ENCODE measurements at regions of chr11 and their contacts with region 1.

Region 1: GRCh38 chr11:32052218-32052617 is 38.7 kb upstream of the RCN1 start:
- DNase-seq: peak in 9 of 10 donors; percentile 20 to 76 (median 52)
- H3K4me3 ChIP-seq: no peak overlapping the region
- H3K27ac ChIP-seq: no peak overlapping the region
- H3K27me3 ChIP-seq: peaks cover 0 to 17% (median 0%) of the 10 kb centered on the region in 45 donors
- CTCF ChIP-seq: peak; percentile 79 to 97 (median 86)

Region 2: DNA sequence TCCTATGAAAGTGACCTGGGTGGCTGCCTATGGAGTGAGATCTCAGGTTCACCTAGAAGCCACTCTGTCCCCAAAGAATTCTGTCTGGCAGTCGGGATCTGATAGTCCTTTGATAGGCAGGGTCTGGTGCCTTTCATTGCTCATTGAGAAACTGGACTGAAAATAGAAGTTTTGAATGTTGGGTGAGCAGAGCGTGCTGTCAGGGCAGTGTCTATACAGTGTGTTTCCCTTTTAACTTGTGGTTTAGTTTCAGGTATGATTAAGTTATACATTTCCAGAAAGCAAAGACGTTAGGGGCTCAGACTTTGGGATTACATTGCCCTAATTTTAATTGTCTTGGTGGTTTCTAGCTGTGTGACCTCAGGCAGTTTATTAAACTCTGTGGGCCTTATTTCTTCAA is 129.8 kb before region 1 on chr11:
- intact Hi-C with region 1: no loop called
- DNase-seq: no peak
- H3K4me3 ChIP-seq: no peak overlapping the region
- H3K27ac ChIP-seq: no peak overlapping the region
- H3K27me3 ChIP-seq: peaks cover 0 to 5% (median 0%) of the 10 kb centered on the region in 45 donors
- CTCF ChIP-seq: no peak

Region 3: DNA sequence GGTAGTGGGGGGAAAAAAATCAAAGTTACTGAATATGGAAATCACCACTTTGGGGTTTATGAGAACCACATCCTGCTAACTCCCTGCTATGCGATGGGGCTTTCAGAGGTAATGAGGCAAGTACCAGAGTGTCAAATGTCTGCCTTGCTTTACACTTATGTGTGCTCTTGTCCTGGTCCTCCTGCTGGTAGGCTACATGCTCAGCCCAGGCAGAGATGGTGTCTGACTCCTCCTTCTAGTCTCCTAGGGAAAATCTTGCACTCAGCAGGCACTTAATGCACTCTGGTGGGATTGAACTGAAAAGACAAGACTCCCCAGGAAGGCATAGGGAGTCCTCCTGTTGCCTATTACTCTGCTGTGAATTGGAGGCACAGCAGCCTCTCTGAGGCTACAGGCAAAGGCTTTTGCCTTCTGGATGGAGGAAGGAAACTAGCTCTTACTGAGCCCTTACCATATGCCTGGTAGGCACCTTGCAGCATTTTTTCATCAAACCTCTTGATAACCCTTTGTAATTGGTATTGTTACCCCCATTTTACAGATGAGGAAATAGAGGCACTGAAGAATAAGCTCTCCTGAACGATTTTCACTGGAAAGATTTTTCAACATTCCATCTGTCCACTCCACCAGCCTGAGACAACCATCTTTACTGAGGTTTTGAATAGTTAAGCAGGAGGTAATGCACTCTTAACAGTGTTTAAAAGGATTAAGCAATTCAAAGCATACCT is 109.0 kb before region 1 on chr11:
- intact Hi-C with region 1: no loop called
- DNase-seq: no peak
- H3K4me3 ChIP-seq: no peak overlapping the region
- H3K27ac ChIP-seq: no peak overlapping the region
- H3K27me3 ChIP-seq: peaks cover 0 to 22% (median 0%) of the 10 kb centered on the region in 45 donors
- CTCF ChIP-seq: no peak

Region 4: DNA sequence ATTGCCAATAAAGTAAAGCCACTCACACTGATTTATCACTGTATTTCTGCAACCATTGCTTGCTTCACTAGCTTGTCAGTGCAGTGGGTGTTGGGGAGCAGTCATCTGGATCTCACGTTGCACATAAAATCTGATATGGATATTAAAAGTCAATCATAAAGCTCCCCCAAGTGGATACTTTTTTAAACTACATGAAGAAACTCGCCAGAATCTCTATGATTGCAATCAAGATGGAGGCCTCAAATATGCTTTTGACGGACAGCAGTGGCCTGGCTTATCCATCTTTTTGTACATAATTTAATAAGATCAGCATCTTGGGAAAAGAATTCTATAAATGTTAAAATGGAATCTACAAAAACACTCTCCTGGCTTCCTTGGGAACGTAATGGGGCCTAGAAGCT is 245.4 kb after region 1 on chr11:
- intact Hi-C with region 1: loop called (anchors 2 to 5 kb)
- DNase-seq: peak in 4 of 10 donors; percentile 7 to 49 (median 38)
- H3K4me3 ChIP-seq: no peak overlapping the region
- H3K27ac ChIP-seq: peak overlapping the region in 2 of 59 donors; percentile 1 to 47
- H3K27me3 ChIP-seq: no peaks in the 10 kb centered on the region
- CTCF ChIP-seq: peak; percentile 41 to 83 (median 62)

Region 5: GRCh38 chr11:32366666-32367065 is 314.4 kb after region 1 on chr11:
- intact Hi-C with region 1: no loop called
- DNase-seq: no peak
- H3K4me3 ChIP-seq: no peak overlapping the region
- H3K27ac ChIP-seq: no peak overlapping the region
- H3K27me3 ChIP-seq: peaks cover 0 to 6% (median 0%) of the 10 kb centered on the region in 45 donors
- CTCF ChIP-seq: no peak

Region 6: DNA sequence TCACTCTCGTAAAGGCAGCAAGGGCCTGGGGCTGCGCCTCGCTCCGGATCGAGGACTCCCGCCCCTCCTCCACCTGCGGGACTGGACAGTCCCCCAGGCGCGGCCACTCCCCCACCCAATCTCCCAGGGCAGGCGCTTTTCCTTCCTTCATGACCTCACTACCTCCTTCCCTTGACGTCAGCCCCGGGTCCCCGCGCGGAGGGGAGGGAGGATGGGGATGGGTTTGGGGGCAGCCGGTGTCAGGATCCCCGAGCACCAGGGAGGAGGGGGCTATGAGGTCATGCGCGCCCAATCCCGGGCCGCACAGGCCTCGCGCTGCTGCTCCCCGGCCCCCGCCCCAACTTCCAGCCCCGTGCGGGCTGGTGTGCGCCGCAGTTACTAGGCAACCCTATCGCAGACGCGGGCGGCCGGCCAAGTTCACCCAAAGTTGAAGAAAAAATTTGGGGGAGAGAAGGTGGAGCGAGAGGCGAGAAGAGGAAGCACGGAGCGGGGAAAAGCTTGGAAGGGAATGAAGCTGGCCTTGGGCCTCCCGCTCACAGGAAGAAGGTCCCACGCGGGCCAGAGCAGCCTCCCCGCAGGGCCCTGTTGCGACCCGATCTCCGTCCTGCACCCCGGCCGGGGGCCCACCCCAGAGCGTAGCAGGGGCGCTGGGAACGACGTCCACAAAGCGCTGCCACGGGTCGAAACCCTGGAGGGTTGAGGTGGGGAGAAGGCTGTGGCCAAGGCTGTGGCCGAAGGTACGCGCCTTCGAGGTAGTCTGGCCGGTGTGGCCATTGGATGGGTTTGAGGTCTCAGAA is 374.8 kb after region 1 on chr11:
- intact Hi-C with region 1: no loop called
- DNase-seq: no peak
- H3K4me3 ChIP-seq: peak overlapping the region in 13 of 59 donors; percentile 6 to 48 (median 19)
- H3K27ac ChIP-seq: no peak overlapping the region
- H3K27me3 ChIP-seq: peaks cover 9 to 99% (median 81%) of the 10 kb centered on the region in 45 donors
- CTCF ChIP-seq: no peak

Measured in dorsolateral prefrontal cortex (tissue), 120 donors.